Posterior cingulate gyrus (tissue), 11 donors: ENCODE measurements at regions of chr19 and their contacts with region 1.

Region 1: GRCh38 chr19:39445265-39446111 is at the start of gene SUPT5H:
- DNase-seq: peak; percentile 91 to 99 (median 95)

Region 2: GRCh38 chr19:39328046-39328705 is 117.3 kb before region 1 on chr19:
- intact Hi-C with region 1: no loop called
- DNase-seq: peak; percentile 82 to 99 (median 96)

Region 3: GRCh38 chr19:39480337-39481228 is 35.1 kb after region 1 on chr19 and contains the start of gene TIMM50:
- intact Hi-C with region 1: loop called (anchors 5 kb)
- DNase-seq: peak; percentile 94 to 99 (median 97)

Region 4: DNA sequence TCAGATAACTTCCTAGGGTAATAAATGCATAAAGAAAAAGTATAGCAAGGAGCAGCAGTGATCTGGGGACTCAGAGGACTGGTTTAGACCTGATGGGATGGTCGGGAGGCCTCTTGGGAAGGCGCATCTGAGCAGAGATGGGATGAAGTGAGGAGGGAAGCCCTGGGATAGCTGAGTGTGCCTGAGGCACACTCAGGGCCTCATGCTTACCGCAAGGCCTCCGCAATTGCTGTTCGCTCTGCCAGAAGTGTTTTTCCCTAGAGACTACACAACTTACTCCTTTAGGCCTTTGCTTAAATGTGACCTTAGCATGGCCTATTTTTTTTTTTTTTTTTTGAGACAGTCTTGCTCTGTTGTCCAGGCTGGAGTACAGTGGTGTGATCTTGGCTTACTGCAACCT is 49.2 kb after region 1 on chr19:
- intact Hi-C with region 1: no loop called
- DNase-seq: no peak

Region 5: GRCh38 chr19:40358773-40359172 is 913.3 kb after region 1 on chr19:
- intact Hi-C with region 1: no loop called
- DNase-seq: no peak